Head of caudate nucleus (tissue), 42 donors: ENCODE measurements at regions of chr6 and their contacts with region 1.

Region 1: GRCh38 chr6:90296346-90297114 is at the start of gene BACH2:
- DNase-seq: peak; percentile 88 to 97 (median 93)

Region 2: DNA sequence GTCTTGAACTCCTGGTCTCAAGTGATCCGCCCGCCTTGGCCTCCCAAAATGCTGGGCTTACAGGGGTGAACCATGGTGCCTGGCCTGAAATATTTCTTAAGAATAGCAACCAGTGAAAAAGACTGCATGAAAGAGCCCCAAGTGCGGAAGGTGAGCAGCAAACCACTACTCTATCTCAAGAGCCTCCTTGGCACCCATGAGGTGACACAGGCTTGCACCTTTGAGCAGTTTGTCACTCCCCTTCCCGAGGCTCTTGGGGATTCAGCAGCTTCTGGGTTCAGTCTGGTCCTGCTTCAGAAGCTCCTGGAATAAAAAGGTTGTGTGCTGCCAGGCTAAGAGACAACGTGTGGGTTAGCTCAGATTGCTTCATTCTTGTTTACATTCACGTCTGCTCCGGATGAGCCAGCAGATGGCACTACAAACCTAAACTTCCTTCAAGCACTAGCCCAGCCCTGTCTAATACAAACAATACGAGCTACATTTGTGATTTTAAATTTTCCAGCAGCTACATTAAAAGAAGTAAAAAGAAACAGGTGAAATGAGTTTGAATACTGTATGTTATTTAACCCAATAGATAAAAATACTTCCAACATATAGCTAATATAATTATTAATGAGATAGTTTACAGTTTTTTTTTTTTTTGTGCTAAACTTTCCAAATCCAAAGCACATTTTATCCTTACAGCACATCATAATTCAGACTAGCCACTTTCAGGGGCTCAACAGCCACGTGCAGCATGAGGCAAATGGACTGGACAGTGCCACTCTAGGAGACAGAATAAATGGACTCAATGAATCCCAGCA is 356.1 kb before region 1 on chr6:
- intact Hi-C with region 1: loop called (anchors 2 kb)
- DNase-seq: peak; percentile 42 to 91 (median 80)

Region 3: GRCh38 chr6:89970609-89971337 is 325.8 kb before region 1 on chr6:
- intact Hi-C with region 1: loop called (anchors 5 kb)
- DNase-seq: peak in 41 of 42 donors; percentile 27 to 82 (median 61)

Region 4: DNA sequence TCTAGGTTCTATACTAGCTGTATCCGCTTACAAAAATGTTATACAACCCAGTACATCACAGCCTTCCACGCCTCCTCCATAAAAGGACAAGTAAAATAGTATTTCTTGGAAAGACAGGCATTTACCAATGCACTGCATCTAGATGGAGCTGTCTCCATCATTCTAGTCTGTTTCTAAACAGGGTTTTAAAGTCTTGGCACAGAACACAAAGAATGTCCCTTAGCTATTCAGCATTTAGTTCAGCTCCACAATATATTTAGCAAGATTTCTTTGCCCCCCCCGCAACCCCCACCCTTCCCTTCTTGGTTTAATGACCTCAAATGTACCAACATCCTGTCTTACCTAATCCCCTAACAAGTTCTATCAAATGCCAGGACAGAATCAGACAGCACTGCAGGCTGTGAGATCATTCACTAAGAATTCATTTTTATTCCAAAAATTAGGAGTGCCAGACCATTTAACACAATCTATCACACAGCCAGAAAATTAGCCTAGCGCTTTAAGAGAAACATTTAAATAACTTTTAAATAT is 198.5 kb before region 1 on chr6:
- intact Hi-C with region 1: loop called (anchors 10 kb)
- DNase-seq: peak in 7 of 42 donors; percentile 19 to 60 (median 28)

Region 5: DNA sequence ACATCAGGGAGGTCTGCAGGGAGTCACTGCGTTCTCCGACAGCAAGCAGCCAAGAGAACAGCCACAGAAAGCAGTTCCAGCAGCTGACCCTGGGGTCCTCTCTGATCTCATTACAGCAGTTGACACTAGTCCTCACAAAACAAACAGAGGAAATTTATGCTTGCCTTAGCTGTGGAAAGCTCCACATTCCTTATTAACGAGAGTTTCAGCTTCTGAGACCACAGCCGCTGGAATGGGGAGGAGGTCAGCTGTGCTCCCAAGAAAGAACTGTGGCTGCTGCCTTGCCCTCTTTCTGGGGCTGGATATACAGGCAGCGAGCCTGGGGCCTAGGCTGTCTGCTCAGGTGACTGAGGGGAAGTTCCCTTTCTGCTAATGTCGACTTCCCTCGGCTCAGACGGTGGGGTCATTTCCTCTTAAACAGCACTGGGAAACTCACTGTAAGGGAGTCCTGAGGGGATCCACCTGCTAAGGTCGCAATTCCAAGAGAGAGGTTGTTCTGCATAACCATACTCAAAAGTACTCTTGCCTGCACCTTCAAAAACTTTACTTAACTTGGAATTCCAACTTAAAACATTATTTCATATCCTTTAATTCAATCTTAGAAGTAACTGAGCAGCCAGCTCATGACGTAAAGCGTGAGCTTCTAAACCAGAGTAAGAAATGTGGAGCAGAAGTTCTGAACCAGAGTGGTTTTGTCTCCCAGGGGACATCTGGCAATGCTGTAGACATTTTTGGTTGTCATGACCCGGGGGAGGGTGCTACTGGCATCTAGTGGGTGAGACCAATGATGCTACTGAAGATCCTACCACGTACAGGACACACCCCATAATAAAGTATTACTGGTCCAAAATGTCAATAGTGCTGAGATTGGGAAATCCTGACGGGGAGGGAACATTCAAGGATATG is 80.2 kb before region 1 on chr6:
- intact Hi-C with region 1: loop called (anchors 5 kb)
- DNase-seq: peak in 3 of 42 donors; percentile 11 to 23 (median 15)